ENCODE measurements at regions of chr17 and their contacts with region 1.

Region 1: GRCh38 chr17:43940630-43941029 is 1.6 kb downstream of the PPY start:
- DNase-seq: no peak
- H3K4me3 ChIP-seq: no peak overlapping the region
- H3K27ac ChIP-seq: no peak overlapping the region
- H3K4me1 ChIP-seq: peaks cover 6 to 19% (median 9%) of the 10 kb centered on the region in 4 donors
- H3K27me3 ChIP-seq: peaks cover 0 to 28% (median 9%) of the 10 kb centered on the region in 4 donors
- CTCF ChIP-seq: peak in 1 of 3 experiments; percentile 22
- EP300 ChIP-seq: no peak
- POLR2A ChIP-seq: no peak

Region 2: DNA sequence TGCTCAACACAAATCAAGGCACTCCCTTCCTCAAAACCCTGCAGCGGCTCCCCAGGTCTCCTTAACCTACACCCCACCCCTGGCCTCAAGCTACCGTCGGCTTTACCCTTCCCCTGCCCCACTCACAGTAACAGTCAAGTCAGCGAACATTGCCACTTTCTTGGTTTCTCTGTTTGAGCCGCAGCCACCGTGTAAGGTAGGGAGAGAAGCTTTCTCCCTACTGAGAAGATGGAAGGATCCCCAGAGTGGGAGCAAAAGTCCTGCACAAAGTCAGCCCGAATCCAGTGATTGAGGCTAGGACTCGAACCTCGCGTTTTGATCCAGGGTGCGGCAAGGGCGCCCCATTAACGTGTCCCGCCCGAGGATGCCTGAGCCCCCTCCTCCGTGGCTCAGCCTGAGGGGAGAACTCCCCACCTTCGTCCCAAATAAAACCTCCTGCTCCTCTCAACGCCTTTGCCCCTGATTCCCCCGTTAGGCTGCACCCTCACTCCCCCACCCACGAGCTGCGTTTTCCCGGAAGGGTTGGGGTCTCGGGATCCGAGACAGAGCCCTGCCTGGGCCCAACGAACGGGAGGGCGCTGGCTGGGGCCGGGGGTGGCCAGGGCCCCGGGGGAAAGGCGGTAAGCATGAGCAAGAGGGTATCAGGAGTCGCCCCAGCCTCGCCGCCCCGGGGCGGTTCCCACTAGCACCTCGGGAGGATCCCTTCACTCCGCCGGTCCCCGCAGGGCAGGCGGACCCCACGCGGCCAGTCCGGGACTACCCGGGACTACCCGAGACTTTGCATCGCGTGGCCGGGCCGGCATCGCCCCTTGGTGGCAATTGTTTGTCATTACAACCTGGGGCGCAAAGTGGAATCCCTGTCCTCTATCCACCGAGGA is 53.9 kb after region 1 on chr17:
- intact Hi-C with region 1: loop called (anchors 5 kb)
- DNase-seq: no peak
- H3K4me3 ChIP-seq: peak overlapping the region; percentile 29 to 50 (median 40)
- H3K27ac ChIP-seq: no peak overlapping the region
- H3K4me1 ChIP-seq: peaks cover 9 to 12% (median 11%) of the 10 kb centered on the region in 4 donors
- H3K27me3 ChIP-seq: peaks cover 0 to 23% (median 13%) of the 10 kb centered on the region in 4 donors
- CTCF ChIP-seq: peak; percentile 74 to 90 (median 75)
- EP300 ChIP-seq: no peak
- POLR2A ChIP-seq: no peak

Region 3: DNA sequence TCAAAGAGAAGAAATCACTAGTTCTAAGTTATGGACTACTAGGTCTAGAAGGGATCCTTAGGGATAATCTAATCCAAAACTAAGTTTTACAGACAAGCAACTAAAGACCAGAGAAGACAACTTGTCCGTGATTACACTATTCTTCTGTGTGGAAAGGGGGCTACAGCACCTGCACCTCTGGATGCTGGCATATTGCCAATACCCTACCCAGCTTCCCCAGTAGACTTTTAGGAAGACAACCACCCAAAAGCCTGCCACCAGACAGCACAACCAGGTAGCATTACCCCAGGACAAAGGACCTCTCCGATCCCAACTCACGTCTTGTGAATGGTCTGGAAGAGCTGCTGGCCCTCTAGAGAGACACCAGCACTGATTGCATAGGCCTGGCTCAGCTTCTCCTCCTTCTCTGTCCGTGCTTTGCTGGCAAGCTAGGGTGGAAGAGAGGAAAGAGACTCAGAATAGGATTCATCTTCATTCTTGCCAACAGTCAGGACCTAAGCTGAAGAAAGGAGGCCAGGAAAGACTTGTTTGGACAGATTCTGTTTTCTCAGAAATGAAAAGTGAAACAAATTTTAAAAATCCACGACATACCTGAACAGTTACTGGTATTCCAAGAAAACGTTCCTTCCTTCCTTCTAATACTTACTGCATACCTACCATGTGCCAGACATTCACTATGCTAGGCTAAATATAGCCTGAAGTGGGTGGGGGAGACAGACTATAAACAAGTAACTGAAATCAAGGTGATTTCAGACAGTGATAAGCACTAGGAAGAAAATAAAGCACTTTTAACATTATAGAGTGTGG is 99.4 kb after region 1 on chr17:
- intact Hi-C with region 1: loop called (anchors 2 kb)
- DNase-seq: no peak
- H3K4me3 ChIP-seq: peak overlapping the region in 1 of 4 donors; percentile 29
- H3K27ac ChIP-seq: peak overlapping the region; percentile 64 to 86 (median 78)
- H3K4me1 ChIP-seq: peaks cover 50 to 60% (median 55%) of the 10 kb centered on the region in 4 donors
- H3K27me3 ChIP-seq: no peaks in the 10 kb centered on the region
- CTCF ChIP-seq: no peak
- EP300 ChIP-seq: peak; percentile 37
- POLR2A ChIP-seq: no peak

Region 4: GRCh38 chr17:44170499-44171201 is 230.0 kb after region 1 on chr17 and contains the start of gene ASB16:
- intact Hi-C with region 1: loop called (anchors 2 kb)
- DNase-seq: no peak
- H3K4me3 ChIP-seq: peak within 1 kb of the TSS; percentile 51 to 56 (median 54)
- H3K27ac ChIP-seq: peak within 1 kb of the TSS; percentile 82 to 89 (median 86)
- H3K4me1 ChIP-seq: peaks cover 13 to 40% (median 39%) of the 10 kb centered on the region in 4 donors
- H3K27me3 ChIP-seq: no peaks in the 10 kb centered on the region
- CTCF ChIP-seq: peak in 1 of 3 experiments; percentile 37
- EP300 ChIP-seq: no peak
- POLR2A ChIP-seq: no peak
- total RNA-seq, gene ASB16: 3.3 to 10.8 (median 6.0) TPM